GM10248 (cell line): ENCODE measurements at regions of chr13 and their contacts with region 1.

Region 1: GRCh38 chr13:76954538-76954937 is 6.2 kb downstream of the ACOD1 start:
- DNase-seq: no peak
- CTCF ChIP-seq: no peak

Region 2: GRCh38 chr13:76971851-76972829 is 17.6 kb after region 1 on chr13:
- CTCF ChIA-PET with region 1: interaction called, 20 read pairs
- POLR2A ChIA-PET with region 1: no interaction called
- DNase-seq: no peak
- CTCF ChIP-seq: no peak